CD8-positive, alpha-beta T cell (primary cell): ENCODE measurements at regions of chr1 and their contacts with region 1.

Region 1: GRCh38 chr1:8015036-8015808 is 10.9 kb downstream of the ERRFI1 start:
- DNase-seq: peak in 5 of 9 experiments; percentile 12 to 73 (median 43)
- ATAC-seq: peak; percentile 64
- H3K4me3 ChIP-seq: no peak overlapping the region
- H3K4me3 Mint-ChIP-seq: no peak overlapping the region
- H3K27ac ChIP-seq: no peak overlapping the region
- H3K27ac Mint-ChIP-seq: no peak overlapping the region
- H3K4me1 ChIP-seq: no peaks in the 10 kb centered on the region
- H3K4me1 Mint-ChIP-seq: no peaks in the 10 kb centered on the region
- H3K27me3 ChIP-seq: no peaks in the 10 kb centered on the region
- H3K27me3 Mint-ChIP-seq: peaks cover 15% of the 10 kb centered on the region
- CTCF ChIP-seq: peak; percentile 71

Region 2: GRCh38 chr1:7953850-7954609 is 61.2 kb before region 1 on chr1:
- CTCF ChIA-PET with region 1: no interaction called
- POLR2A ChIA-PET with region 1: no interaction called
- intact Hi-C with region 1: no loop called
- DNase-seq: peak; percentile 32 to 92 (median 78)
- ATAC-seq: peak; percentile 64
- H3K4me3 ChIP-seq: peak overlapping the region; percentile 79 to 80
- H3K4me3 Mint-ChIP-seq: peak overlapping the region; percentile 88
- H3K27ac ChIP-seq: peak overlapping the region; percentile 83 to 97
- H3K27ac Mint-ChIP-seq: peak overlapping the region; percentile 97
- H3K4me1 ChIP-seq: peaks cover 19% of the 10 kb centered on the region
- H3K4me1 Mint-ChIP-seq: peaks cover 43% of the 10 kb centered on the region
- H3K27me3 ChIP-seq: no peaks in the 10 kb centered on the region
- H3K27me3 Mint-ChIP-seq: no peaks in the 10 kb centered on the region
- CTCF ChIP-seq: no peak

Region 3: GRCh38 chr1:7983086-7983778 is 32.0 kb before region 1 on chr1:
- CTCF ChIA-PET with region 1: interaction called, 33 read pairs
- POLR2A ChIA-PET with region 1: no interaction called
- intact Hi-C with region 1: loop called in 1 of 2 experiments (anchors 1 kb)
- DNase-seq: no peak
- ATAC-seq: no peak
- H3K4me3 ChIP-seq: no peak overlapping the region
- H3K4me3 Mint-ChIP-seq: no peak overlapping the region
- H3K27ac ChIP-seq: no peak overlapping the region
- H3K27ac Mint-ChIP-seq: no peak overlapping the region
- H3K4me1 ChIP-seq: peaks cover 4% of the 10 kb centered on the region
- H3K4me1 Mint-ChIP-seq: peaks cover 12% of the 10 kb centered on the region
- H3K27me3 ChIP-seq: no peaks in the 10 kb centered on the region
- H3K27me3 Mint-ChIP-seq: no peaks in the 10 kb centered on the region
- CTCF ChIP-seq: no peak

Region 4: DNA sequence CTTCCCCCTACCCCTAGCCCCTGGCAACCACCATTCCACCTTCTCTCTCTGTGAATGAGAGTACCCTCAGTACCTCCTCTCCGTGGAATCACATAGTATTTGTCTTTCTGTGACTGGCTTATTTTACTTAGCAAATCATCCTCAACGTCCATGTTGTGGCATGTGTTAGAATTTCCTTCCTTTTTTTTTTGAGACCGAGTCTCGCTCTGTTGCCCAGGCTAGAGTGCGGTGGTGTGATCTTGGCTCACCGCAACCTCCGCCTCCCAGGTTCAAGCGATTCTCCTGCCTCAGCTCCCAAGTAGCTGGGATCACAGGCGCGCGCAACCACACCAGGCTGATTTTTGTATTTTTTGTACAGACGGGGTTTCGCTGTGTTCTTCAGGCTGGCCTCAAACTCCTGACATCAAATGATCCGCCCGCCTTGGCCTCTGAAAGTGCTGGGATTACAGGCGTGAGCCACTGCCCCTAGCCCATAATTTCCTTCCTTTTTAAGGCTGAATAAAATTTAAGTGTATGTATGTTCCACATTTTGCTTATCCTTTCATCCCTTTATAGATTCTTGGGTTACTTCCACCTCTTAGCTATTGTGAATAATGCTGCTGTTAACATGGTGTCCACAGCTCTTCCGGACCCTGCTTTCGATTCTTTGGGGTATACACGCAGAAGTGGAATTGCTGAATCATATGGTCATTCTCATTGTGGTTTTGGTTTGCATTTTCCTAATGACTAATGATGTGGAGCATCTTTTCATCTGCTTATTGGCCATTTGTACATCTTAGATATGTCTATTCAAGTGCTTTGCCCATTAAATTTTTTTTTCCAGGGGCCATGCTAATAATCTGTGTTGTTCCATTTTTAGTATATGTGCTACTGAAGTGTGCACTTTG is 21.4 kb before region 1 on chr1:
- CTCF ChIA-PET with region 1: interaction called, 12 read pairs
- POLR2A ChIA-PET with region 1: no interaction called
- intact Hi-C with region 1: no loop called
- DNase-seq: no peak
- ATAC-seq: no peak
- H3K4me3 ChIP-seq: no peak overlapping the region
- H3K4me3 Mint-ChIP-seq: no peak overlapping the region
- H3K27ac ChIP-seq: no peak overlapping the region
- H3K27ac Mint-ChIP-seq: no peak overlapping the region
- H3K4me1 ChIP-seq: no peaks in the 10 kb centered on the region
- H3K4me1 Mint-ChIP-seq: no peaks in the 10 kb centered on the region
- H3K27me3 ChIP-seq: no peaks in the 10 kb centered on the region
- H3K27me3 Mint-ChIP-seq: no peaks in the 10 kb centered on the region
- CTCF ChIP-seq: no peak

Region 5: DNA sequence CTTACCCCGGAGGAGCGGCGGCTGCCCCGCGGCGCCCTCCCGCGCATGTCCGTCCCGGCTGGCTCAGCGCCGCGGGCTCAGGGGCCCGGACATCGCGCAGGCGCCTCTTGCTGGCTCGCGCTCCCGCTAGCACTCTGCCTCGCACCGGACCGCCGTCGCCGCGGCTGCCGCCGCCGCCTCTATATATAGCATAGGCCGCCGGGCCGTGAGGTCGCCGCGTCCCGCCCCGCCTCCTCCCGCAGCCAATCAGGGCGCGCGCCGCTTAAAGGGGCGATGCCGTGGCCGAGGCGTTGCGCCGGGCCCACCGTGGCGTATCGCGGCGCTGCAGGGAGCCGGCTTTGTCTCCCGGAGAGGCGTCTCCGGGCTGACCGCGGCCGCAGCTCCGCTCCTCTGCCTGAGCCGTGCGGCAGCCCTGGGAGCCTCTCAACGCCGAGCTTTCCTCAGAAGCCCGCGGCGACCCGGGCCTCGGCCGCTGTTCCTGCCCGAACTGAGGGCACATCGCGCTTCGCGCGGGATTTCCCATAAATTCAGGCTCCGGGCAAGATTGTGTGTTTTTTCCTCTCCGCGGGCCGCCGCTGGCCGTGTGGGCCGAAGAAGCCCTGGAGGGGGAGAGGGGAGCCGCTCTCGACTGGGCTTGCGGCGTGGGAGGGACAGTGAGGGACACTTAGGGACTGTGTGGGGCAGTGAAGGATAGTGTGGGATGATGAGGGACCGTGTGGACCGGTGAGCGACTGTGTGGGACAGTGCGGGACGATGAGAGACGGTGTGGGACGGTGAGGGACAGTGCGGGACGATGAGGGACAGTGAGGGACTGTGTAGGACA is 11.1 kb after region 1 on chr1 and contains the start of gene ERRFI1:
- CTCF ChIA-PET with region 1: interaction called, 50 read pairs
- POLR2A ChIA-PET with region 1: interaction called, 8 read pairs
- intact Hi-C with region 1: no loop called
- DNase-seq: peak; percentile 74 to 93 (median 85)
- ATAC-seq: peak; percentile 90
- H3K4me3 ChIP-seq: peak within 1 kb of the TSS; percentile 45 to 55
- H3K4me3 Mint-ChIP-seq: peak within 1 kb of the TSS; percentile 84
- H3K27ac ChIP-seq: no peak within 1 kb of the TSS
- H3K27ac Mint-ChIP-seq: peak within 1 kb of the TSS; percentile 5
- H3K4me1 ChIP-seq: peaks cover 13% of the 10 kb centered on the region
- H3K4me1 Mint-ChIP-seq: peaks cover 12% of the 10 kb centered on the region
- H3K27me3 ChIP-seq: no peaks in the 10 kb centered on the region
- H3K27me3 Mint-ChIP-seq: peaks cover 11% of the 10 kb centered on the region
- CTCF ChIP-seq: no peak
- total RNA-seq, gene ERRFI1: 4.4 to 4.9 TPM

Region 6: DNA sequence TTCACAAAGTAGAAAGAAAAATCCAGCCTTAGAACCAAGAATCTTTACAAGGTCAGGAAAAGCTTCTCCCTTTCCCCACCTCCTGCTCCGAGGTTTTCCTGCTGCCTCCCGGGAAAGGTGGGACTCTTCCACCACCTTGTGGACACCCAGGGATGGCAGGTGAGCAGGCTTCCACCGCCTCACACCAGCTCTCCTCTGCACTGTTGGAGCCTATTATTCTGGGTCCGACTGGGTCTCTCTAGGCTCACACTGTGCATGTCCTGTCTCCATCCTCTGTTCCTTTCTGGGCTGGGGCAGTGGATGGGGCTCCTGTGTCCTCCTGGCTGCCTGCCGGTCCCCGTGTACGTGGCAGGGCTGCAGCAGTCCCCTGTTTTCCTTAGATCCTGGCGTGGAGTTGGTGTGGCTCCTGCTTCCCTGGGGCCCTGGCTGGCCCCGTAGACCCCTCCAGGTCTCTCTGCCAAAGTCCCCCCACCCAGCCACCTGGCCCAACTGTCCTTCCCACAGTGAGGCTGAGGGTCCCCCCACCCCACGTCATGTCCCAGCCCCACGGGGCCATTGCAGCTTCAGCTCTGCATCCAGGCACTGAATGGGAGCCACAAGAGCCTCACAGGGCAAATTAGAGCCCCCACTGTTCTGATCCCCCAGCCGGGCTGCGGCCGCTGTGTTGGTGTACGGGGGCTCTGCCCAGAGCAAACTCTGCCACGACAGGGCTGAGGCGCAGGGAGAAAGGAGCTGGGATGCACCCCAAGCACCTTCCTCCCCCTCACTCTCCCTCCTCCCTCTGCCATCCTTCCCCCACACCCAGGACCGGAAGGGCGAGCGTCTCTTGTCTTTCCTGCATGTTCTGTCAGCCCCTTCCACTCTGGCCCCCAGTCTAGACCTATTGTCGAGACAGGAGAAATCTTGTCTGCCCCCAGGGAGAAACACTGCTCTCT is 299.4 kb after region 1 on chr1:
- CTCF ChIA-PET with region 1: interaction called, 114 read pairs
- POLR2A ChIA-PET with region 1: interaction called, 3 read pairs
- intact Hi-C with region 1: loop called (anchors 1 kb)
- DNase-seq: peak in 8 of 9 experiments; percentile 14 to 73 (median 53)
- ATAC-seq: no peak
- H3K4me3 ChIP-seq: no peak overlapping the region
- H3K4me3 Mint-ChIP-seq: no peak overlapping the region
- H3K27ac ChIP-seq: no peak overlapping the region
- H3K27ac Mint-ChIP-seq: no peak overlapping the region
- H3K4me1 ChIP-seq: peaks cover 20% of the 10 kb centered on the region
- H3K4me1 Mint-ChIP-seq: peaks cover 15% of the 10 kb centered on the region
- H3K27me3 ChIP-seq: peaks cover 3 to 11% of the 10 kb centered on the region in 2 experiments
- H3K27me3 Mint-ChIP-seq: peaks cover 23% of the 10 kb centered on the region
- CTCF ChIP-seq: peak; percentile 60

Region 7: DNA sequence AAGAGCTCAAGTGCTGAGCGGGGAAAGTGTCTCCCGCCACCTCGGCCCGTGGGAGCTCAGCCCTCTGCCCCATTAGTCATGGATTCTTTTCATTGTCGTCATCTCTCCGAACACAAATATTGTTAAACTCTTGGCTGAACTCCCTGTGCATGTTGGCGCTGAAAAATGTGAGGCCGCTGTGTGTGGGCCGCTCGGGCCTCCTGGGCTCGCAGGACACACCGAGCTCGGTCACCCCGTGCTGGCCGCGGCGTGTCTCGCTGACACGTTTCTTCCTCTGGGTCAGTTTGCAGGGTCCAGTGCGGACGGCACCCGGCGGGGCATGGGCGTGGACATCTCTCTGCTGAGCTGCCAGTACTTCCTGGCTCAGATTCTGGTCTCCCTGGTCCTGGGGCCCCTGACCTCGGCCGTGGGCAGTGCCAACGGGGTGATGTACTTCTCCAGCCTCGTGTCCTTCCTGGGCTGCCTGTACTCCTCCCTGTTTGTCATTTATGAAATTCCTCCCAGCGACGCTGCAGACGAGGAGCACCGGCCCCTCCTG is 328.3 kb after region 1 on chr1:
- CTCF ChIA-PET with region 1: interaction called, 192 read pairs
- POLR2A ChIA-PET with region 1: interaction called, 3 read pairs
- intact Hi-C with region 1: no loop called
- DNase-seq: no peak
- ATAC-seq: no peak
- H3K4me3 ChIP-seq: no peak overlapping the region
- H3K4me3 Mint-ChIP-seq: no peak overlapping the region
- H3K27ac ChIP-seq: no peak overlapping the region
- H3K27ac Mint-ChIP-seq: no peak overlapping the region
- H3K4me1 ChIP-seq: no peaks in the 10 kb centered on the region
- H3K4me1 Mint-ChIP-seq: no peaks in the 10 kb centered on the region
- H3K27me3 ChIP-seq: no peaks in the 10 kb centered on the region
- H3K27me3 Mint-ChIP-seq: no peaks in the 10 kb centered on the region
- CTCF ChIP-seq: no peak

Region 8: DNA sequence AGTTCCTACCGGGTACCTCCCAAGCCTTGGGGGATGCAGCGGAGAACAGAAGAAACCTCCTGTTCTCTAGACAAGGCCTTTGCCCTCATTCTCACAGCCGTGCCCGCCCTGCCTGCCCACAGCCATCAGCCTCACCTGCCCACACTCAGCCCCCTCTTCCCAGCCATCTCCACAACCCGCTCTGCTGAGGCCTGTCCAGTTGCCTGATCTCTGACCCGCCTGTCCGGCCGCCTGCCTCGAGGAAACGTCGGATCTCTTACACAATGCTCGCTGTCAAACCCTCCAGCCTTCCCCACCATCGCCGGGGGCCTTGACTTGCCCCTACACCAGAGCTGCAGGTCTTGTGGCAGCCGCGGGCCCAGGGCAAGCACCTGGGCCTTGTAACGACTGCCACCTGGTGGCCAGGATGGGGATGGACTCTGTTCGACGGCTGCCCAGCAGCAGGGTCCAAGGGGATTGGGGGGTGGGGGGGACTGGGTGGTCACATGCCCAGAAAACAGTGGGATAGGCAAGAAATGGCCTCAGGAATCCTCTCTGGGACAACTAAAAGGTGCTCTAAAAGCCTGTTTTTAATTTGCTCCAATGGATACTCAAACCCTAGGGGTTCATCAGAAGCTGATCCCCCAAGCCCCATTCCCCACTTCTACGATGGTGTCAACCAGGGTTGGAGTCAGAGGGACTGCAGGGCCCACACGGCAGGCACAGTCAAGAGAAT is 333.7 kb after region 1 on chr1:
- CTCF ChIA-PET with region 1: interaction called, 192 read pairs
- POLR2A ChIA-PET with region 1: interaction called, 9 read pairs
- intact Hi-C with region 1: loop called (anchors 1 kb)
- DNase-seq: peak; percentile 47 to 83 (median 74)
- ATAC-seq: peak; percentile 96
- H3K4me3 ChIP-seq: no peak overlapping the region
- H3K4me3 Mint-ChIP-seq: no peak overlapping the region
- H3K27ac ChIP-seq: no peak overlapping the region
- H3K27ac Mint-ChIP-seq: peak overlapping the region; percentile 70
- H3K4me1 ChIP-seq: peaks cover 3% of the 10 kb centered on the region
- H3K4me1 Mint-ChIP-seq: peaks cover 4% of the 10 kb centered on the region
- H3K27me3 ChIP-seq: no peaks in the 10 kb centered on the region
- H3K27me3 Mint-ChIP-seq: peaks cover 2% of the 10 kb centered on the region
- CTCF ChIP-seq: peak; percentile 69